Activated CD8-positive, alpha-beta memory T cell treated with anti-CD3 and anti-CD28 coated beads, Interleukin-2, amount 10 ng/mL, durations not matched to agents 7 days and 5 days (primary cell): ENCODE measurements at regions of chr2 and their contacts with region 1.

Region 1: GRCh38 chr2:134245340-134245984 is 8.4 kb upstream of the MGAT5 start:
- DNase-seq: peak; percentile 82
- ATAC-seq: peak; percentile 59
- H3K4me3 Mint-ChIP-seq: no peak overlapping the region
- H3K27ac Mint-ChIP-seq: peak overlapping the region; percentile 41
- H3K4me1 Mint-ChIP-seq: peaks cover 67% of the 10 kb centered on the region
- H3K27me3 Mint-ChIP-seq: peaks cover 39% of the 10 kb centered on the region

Region 2: DNA sequence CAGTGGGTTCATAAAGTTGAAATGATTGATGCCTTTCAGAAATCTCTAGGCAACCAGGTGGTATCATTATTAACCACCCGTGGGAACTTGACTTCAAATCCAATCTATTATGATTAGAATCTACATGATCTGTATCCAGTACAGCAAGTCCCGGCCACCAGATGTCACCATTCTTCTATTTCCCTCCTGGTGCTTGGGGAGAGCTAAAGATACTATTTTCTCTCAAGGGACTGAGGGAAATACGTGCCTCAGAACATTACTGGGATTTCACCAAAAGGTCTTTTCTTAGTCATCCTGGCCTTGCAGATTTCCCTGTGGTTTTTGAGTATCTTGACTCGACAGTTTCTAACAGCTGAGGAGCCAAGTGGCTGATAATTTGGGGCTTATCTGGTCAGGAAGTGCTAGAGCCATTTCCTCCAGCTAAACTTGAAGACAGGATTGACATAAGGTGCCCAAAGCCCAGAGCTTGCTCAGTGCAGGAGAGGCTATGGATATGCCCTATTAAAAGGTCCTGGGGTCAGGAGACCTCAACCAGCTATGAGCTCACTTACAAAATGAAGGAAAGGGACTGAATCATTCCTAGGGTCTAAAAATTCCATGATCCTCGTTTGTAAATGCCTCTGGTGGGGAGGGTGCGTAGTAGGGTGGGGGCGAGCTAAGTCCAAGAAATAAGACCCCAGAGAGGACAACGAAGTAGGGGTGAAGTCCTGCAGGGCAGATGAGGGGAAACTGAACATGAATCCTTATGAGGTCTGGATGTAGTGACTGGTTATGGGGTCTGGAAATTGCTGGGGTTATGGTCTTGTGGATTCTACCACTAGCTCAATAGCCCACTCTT is 127.0 kb before region 1 on chr2:
- CTCF ChIA-PET with region 1: interaction called, 89 read pairs
- DNase-seq: peak; percentile 93
- ATAC-seq: peak; percentile 47
- H3K4me3 Mint-ChIP-seq: peak overlapping the region; percentile 87
- H3K27ac Mint-ChIP-seq: peak overlapping the region; percentile 92
- H3K4me1 Mint-ChIP-seq: peaks cover 35% of the 10 kb centered on the region
- H3K27me3 Mint-ChIP-seq: peaks cover 14% of the 10 kb centered on the region

Region 3: GRCh38 chr2:134207564-134208209 is 37.8 kb before region 1 on chr2:
- CTCF ChIA-PET with region 1: interaction called, 10 read pairs
- DNase-seq: peak; percentile 69
- ATAC-seq: peak; percentile 88
- H3K4me3 Mint-ChIP-seq: no peak overlapping the region
- H3K27ac Mint-ChIP-seq: no peak overlapping the region
- H3K4me1 Mint-ChIP-seq: peaks cover 7% of the 10 kb centered on the region
- H3K27me3 Mint-ChIP-seq: no peaks in the 10 kb centered on the region

Region 4: GRCh38 chr2:134233728-134234136 is 11.7 kb before region 1 on chr2:
- CTCF ChIA-PET with region 1: interaction called, 39 read pairs
- DNase-seq: no peak
- ATAC-seq: peak; percentile 11
- H3K4me3 Mint-ChIP-seq: no peak overlapping the region
- H3K27ac Mint-ChIP-seq: peak overlapping the region; percentile 81
- H3K4me1 Mint-ChIP-seq: peaks cover 59% of the 10 kb centered on the region
- H3K27me3 Mint-ChIP-seq: no peaks in the 10 kb centered on the region

Region 5: GRCh38 chr2:134282629-134283400 is 37.4 kb after region 1 on chr2:
- CTCF ChIA-PET with region 1: interaction called, 10 read pairs
- DNase-seq: peak; percentile 83
- ATAC-seq: peak; percentile 91
- H3K4me3 Mint-ChIP-seq: peak overlapping the region; percentile 48
- H3K27ac Mint-ChIP-seq: peak overlapping the region; percentile 86
- H3K4me1 Mint-ChIP-seq: peaks cover 36% of the 10 kb centered on the region
- H3K27me3 Mint-ChIP-seq: peaks cover 50% of the 10 kb centered on the region

Region 6: DNA sequence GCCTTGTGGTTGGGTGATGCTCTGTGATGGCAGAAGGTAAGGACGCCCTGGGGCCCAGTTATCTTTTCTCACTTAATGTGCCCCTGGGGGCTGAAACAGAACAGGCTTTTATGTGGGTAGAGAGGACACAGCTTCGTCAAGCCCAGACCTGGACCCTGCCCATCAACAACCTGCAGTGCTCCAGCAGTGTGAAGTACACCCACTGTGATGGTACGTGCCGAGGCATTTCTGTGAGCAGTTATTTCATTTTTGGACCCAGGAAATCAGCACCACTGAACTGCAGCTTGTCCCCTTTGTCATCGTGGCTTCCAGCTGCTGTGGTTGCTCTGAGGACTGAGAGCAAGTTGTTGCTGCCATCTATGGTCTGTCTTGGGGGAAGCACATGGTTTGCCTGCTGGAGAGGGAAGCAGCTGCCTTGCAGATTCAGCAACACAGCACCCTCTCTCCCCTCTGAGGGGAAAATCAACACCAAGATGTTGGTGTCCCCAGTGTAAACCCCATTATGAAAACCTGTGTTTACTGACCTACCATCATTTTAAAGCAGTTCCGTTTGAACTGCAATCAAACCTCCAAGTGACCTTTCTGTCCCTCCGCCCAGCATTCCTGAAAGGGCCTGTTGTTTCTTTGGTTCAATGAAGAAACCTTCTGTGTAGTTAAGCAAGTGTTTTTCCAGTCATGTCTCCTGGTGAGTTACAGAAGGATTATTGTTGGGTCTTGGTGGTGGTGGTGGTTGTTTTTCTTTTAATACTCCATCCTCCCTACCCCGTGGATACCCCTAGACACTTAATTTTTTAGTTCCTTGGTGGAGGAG is 166.6 kb after region 1 on chr2:
- CTCF ChIA-PET with region 1: interaction called, 50 read pairs
- DNase-seq: peak; percentile 89
- ATAC-seq: peak; percentile 99
- H3K4me3 Mint-ChIP-seq: no peak overlapping the region
- H3K27ac Mint-ChIP-seq: peak overlapping the region; percentile 13
- H3K4me1 Mint-ChIP-seq: peaks cover 42% of the 10 kb centered on the region
- H3K27me3 Mint-ChIP-seq: no peaks in the 10 kb centered on the region